Activated T-helper 1 cell treated with anti-CD3 and anti-CD28 coated beads, Interleukin-12 subunit alpha, Interleukin-12 subunit beta, Interleukin-2, Interleukin-4 antibody, amounts not matched to agents 30 ng/mL and 10 ng/mL and 1 ng/mL, durations not matched to agents 14 hours and 24 hours and 36 hours (primary cell): ENCODE measurements at regions of chr1 and their contacts with region 1.

Region 1: GRCh38 chr1:167491586-167492461 is 26.5 kb downstream of the CD247 start:
- DNase-seq: no peak
- H3K4me3 Mint-ChIP-seq: peak overlapping the region; percentile 70
- H3K27ac Mint-ChIP-seq: peak overlapping the region; percentile 88
- H3K4me1 Mint-ChIP-seq: peaks cover 92% of the 10 kb centered on the region
- H3K27me3 Mint-ChIP-seq: no peaks in the 10 kb centered on the region

Region 2: GRCh38 chr1:167249702-167250101 is 242.1 kb before region 1 on chr1:
- intact Hi-C with region 1: no loop called
- DNase-seq: no peak
- H3K4me3 Mint-ChIP-seq: no peak overlapping the region
- H3K27ac Mint-ChIP-seq: no peak overlapping the region
- H3K4me1 Mint-ChIP-seq: peaks cover 20% of the 10 kb centered on the region
- H3K27me3 Mint-ChIP-seq: no peaks in the 10 kb centered on the region

Region 3: DNA sequence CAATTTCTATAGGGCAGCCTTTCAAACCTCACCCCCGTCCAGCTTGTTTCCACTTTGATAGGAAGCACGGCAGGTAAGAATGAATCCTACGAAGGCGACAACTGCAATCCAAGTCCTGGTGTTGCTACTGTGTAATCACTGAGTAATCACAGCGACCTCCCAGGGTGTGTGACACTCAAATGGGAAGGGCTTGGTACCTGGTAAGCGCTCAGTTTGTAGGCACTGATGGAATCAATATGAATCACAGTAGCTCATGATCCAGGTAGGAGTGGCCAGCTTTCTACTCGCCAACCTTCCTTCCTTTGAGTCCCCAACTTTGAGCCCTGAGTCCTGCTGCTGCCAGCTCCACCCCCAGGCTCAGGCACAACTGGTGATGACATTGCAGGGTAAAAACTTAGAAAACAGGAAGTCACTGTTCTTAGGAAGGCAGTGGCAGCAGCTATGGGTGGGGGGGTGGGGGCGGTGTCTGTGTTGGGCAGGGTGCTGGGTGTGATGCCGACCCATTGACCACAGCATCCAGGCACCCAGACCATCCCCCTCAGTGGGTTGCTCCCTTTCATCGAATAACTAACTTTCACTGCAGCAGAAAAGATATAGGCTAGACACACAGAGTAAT is 44.2 kb before region 1 on chr1:
- intact Hi-C with region 1: loop called (anchors 1 kb)
- DNase-seq: peak; percentile 70
- H3K4me3 Mint-ChIP-seq: peak overlapping the region; percentile 68
- H3K27ac Mint-ChIP-seq: peak overlapping the region; percentile 90
- H3K4me1 Mint-ChIP-seq: peaks cover 77% of the 10 kb centered on the region
- H3K27me3 Mint-ChIP-seq: no peaks in the 10 kb centered on the region

Region 4: DNA sequence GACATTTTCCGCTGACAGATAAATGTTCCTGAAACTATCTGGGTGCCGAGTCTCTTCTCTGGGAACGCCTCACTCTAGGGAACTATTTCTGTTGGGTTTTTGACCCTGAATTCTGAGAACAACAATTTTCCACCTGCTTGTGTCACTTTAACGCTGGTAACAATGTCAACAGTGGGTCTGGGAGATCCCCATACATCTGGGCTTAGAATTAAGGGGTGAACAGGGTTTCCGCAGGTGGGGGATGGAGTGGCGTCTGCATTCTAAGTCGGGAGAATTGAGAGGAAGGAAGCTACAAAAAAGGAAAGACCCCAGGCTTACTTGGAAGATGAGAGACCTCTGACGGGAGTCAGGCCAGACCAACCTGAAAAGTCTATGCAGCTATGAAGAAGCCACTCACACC is 17.8 kb after region 1 on chr1:
- intact Hi-C with region 1: loop called (anchors 2 kb)
- DNase-seq: no peak
- H3K4me3 Mint-ChIP-seq: peak overlapping the region; percentile 69
- H3K27ac Mint-ChIP-seq: peak overlapping the region; percentile 85
- H3K4me1 Mint-ChIP-seq: peaks cover 84% of the 10 kb centered on the region
- H3K27me3 Mint-ChIP-seq: no peaks in the 10 kb centered on the region